ENCODE measurements at regions of chr15 and their contacts with region 1.

Region 1: GRCh38 chr15:78203346-78204225 is 30.8 kb downstream of the ACSBG1 start:
- DNase-seq: no peak
- ATAC-seq: no peak
- H3K4me3 ChIP-seq: no peak overlapping the region
- H3K27ac ChIP-seq: no peak overlapping the region
- H3K4me1 ChIP-seq: no peaks in the 10 kb centered on the region
- H3K27me3 ChIP-seq: peaks cover 38% of the 10 kb centered on the region
- CTCF ChIP-seq: no peak
- POLR2A ChIP-seq: no peak
- RAD21 ChIP-seq: no peak

Region 2: GRCh38 chr15:78291716-78292115 is 88.1 kb after region 1 on chr15:
- CTCF ChIA-PET with region 1: no interaction called
- POLR2A ChIA-PET with region 1: no interaction called
- dilution Hi-C with region 1: no loop called
- in situ Hi-C with region 1: no loop called
- intact Hi-C with region 1: no loop called
- DNase-seq: no peak
- ATAC-seq: no peak
- H3K4me3 ChIP-seq: no peak overlapping the region
- H3K27ac ChIP-seq: no peak overlapping the region
- H3K4me1 ChIP-seq: no peaks in the 10 kb centered on the region
- H3K27me3 ChIP-seq: no peaks in the 10 kb centered on the region
- CTCF ChIP-seq: no peak
- POLR2A ChIP-seq: no peak
- RAD21 ChIP-seq: no peak

Region 3: DNA sequence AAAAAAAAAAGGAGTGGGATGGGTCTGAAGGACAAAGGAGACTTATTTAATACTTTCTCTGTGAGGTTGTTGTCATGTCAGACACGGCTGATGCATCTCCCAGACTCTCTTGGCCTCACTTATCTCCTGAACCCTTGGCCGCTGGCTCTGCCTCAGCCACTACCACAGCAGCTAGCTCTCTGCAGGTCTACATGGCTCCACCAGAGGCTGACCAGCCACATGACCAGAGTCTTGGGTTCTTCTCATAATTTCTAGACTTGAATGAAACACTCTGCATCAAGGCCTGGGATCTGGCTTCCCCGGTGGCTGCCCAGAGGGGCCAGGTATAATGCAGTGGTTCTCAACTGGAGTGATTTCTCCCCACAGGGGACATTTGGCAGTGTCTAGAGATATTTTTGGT is 199.9 kb after region 1 on chr15:
- CTCF ChIA-PET with region 1: no interaction called
- POLR2A ChIA-PET with region 1: interaction called, 12 read pairs
- dilution Hi-C with region 1: no loop called
- in situ Hi-C with region 1: no loop called
- intact Hi-C with region 1: no loop called
- DNase-seq: no peak
- ATAC-seq: no peak
- H3K4me3 ChIP-seq: no peak overlapping the region
- H3K27ac ChIP-seq: no peak overlapping the region
- H3K4me1 ChIP-seq: no peaks in the 10 kb centered on the region
- H3K27me3 ChIP-seq: peaks cover 35% of the 10 kb centered on the region
- CTCF ChIP-seq: no peak
- POLR2A ChIP-seq: no peak
- RAD21 ChIP-seq: no peak

Measured in IMR-90 (cell line).